ENCODE measurements at regions of chr5 and their contacts with region 1.

Region 1: GRCh38 chr5:78359831-78360673 is at the start of gene SCAMP1:
- DNase-seq: peak; percentile 88 to 96 (median 91)
- ATAC-seq: peak; percentile 78
- H3K4me3 ChIP-seq: peak within 1 kb of the TSS; percentile 95
- H3K4me3 Mint-ChIP-seq: peak within 1 kb of the TSS; percentile 86
- H3K27ac ChIP-seq: peak within 1 kb of the TSS; percentile 92 to 97
- H3K27ac Mint-ChIP-seq: peak within 1 kb of the TSS; percentile 96
- H3K4me1 ChIP-seq: peaks cover 27% of the 10 kb centered on the region
- H3K4me1 Mint-ChIP-seq: peaks cover 53% of the 10 kb centered on the region
- H3K27me3 ChIP-seq: no peaks in the 10 kb centered on the region
- H3K27me3 Mint-ChIP-seq: no peaks in the 10 kb centered on the region
- CTCF ChIP-seq: no peak
- total RNA-seq, gene SCAMP1: 19.2 to 20.3 TPM

Region 2: DNA sequence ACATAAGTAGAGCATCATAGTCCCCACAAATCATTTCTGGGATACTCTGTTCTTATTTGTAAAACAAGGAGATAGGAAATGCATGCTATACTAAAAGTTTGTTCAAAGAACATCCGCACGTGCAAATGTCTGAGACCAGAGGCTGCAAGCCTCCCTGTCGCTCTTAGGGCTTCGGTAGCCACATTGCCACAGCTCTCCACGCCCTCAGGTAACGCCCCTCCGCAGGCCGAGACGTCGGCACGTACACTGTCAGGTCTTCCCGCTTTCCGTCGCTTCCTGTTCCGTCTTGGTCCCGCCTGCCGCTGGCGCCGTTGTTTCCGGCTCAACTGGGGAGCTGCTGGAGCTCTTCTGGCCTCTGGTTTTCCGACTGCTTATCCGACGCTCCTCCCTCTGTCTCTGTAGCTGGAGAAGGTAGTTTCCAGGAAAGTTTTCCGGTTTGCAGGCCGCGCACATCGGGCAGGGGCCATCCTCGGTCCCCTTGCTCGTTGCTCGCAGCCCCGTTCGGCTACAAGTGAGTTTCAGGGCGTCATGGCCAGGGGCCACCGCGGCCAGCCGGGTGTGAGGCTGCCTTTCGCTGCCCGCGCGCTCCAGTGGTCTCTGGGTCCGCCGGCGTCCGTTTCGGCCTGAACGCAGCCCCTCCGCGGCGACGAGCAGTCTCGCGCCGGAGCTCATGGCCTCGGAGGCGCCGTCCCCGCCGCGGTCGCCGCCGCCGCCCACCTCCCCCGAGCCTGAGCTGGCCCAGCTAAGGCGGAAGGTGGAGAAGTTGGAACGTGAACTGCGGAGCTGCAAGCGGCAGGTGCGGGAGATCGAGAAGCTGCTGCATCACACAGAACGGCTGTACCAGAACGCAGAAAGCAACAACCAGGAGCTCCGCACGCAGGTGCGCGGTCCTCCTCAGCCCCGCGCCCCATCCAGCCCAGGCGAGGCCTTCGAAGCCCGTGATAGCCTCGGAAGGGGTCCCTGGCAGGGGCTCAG is 1329.7 kb before region 1 on chr5 and contains the start of gene AGGF1:
- CTCF ChIA-PET with region 1: no interaction called
- POLR2A ChIA-PET with region 1: no interaction called
- intact Hi-C with region 1: loop called in 1 of 2 experiments (anchors 5 kb)
- DNase-seq: peak; percentile 78 to 95 (median 92)
- ATAC-seq: peak; percentile 98
- H3K4me3 ChIP-seq: peak within 1 kb of the TSS; percentile 84 to 94
- H3K4me3 Mint-ChIP-seq: peak within 1 kb of the TSS; percentile 90
- H3K27ac ChIP-seq: peak within 1 kb of the TSS; percentile 69 to 85
- H3K27ac Mint-ChIP-seq: peak within 1 kb of the TSS; percentile 94
- H3K4me1 ChIP-seq: peaks cover 21% of the 10 kb centered on the region
- H3K4me1 Mint-ChIP-seq: peaks cover 43% of the 10 kb centered on the region
- H3K27me3 ChIP-seq: no peaks in the 10 kb centered on the region
- H3K27me3 Mint-ChIP-seq: no peaks in the 10 kb centered on the region
- CTCF ChIP-seq: no peak
- total RNA-seq, gene AGGF1: 14.8 to 14.9 TPM

Region 3: GRCh38 chr5:77086689-77087483 is 1273.2 kb before region 1 on chr5 and contains the start of gene ZBED3:
- CTCF ChIA-PET with region 1: no interaction called
- POLR2A ChIA-PET with region 1: no interaction called
- intact Hi-C with region 1: loop called in 1 of 2 experiments (anchors 5 kb)
- DNase-seq: peak; percentile 29 to 87 (median 68)
- ATAC-seq: peak; percentile 87
- H3K4me3 ChIP-seq: peak within 1 kb of the TSS; percentile 74
- H3K4me3 Mint-ChIP-seq: peak within 1 kb of the TSS; percentile 92
- H3K27ac ChIP-seq: peak within 1 kb of the TSS; percentile 34 to 57
- H3K27ac Mint-ChIP-seq: peak within 1 kb of the TSS; percentile 84
- H3K4me1 ChIP-seq: peaks cover 16% of the 10 kb centered on the region
- H3K4me1 Mint-ChIP-seq: peaks cover 25% of the 10 kb centered on the region
- H3K27me3 ChIP-seq: no peaks in the 10 kb centered on the region
- H3K27me3 Mint-ChIP-seq: peaks cover 2% of the 10 kb centered on the region
- CTCF ChIP-seq: peak; percentile 31
- total RNA-seq, gene ZBED3: 11.6 to 12.3 TPM

Region 4: GRCh38 chr5:78984439-78985115 is 624.5 kb after region 1 on chr5:
- CTCF ChIA-PET with region 1: no interaction called
- POLR2A ChIA-PET with region 1: interaction called, 9 read pairs
- intact Hi-C with region 1: loop called (anchors 1 to 5 kb)
- DNase-seq: peak; percentile 55 to 90 (median 75)
- ATAC-seq: peak; percentile 74
- H3K4me3 ChIP-seq: peak overlapping the region; percentile 54 to 68
- H3K4me3 Mint-ChIP-seq: peak overlapping the region; percentile 94
- H3K27ac ChIP-seq: peak overlapping the region; percentile 40 to 75
- H3K27ac Mint-ChIP-seq: peak overlapping the region; percentile 92
- H3K4me1 ChIP-seq: peaks cover 14% of the 10 kb centered on the region
- H3K4me1 Mint-ChIP-seq: peaks cover 28% of the 10 kb centered on the region
- H3K27me3 ChIP-seq: no peaks in the 10 kb centered on the region
- H3K27me3 Mint-ChIP-seq: no peaks in the 10 kb centered on the region
- CTCF ChIP-seq: no peak

Region 5: GRCh38 chr5:79235634-79236363 is 875.7 kb after region 1 on chr5 and contains the start of gene JMY:
- CTCF ChIA-PET with region 1: no interaction called
- POLR2A ChIA-PET with region 1: interaction called, 3 read pairs
- intact Hi-C with region 1: loop called in 1 of 2 experiments (anchors 5 kb)
- DNase-seq: peak; percentile 72 to 94 (median 85)
- ATAC-seq: peak; percentile 86
- H3K4me3 ChIP-seq: peak within 1 kb of the TSS; percentile 79 to 81
- H3K4me3 Mint-ChIP-seq: peak within 1 kb of the TSS; percentile 97
- H3K27ac ChIP-seq: peak within 1 kb of the TSS; percentile 91 to 98
- H3K27ac Mint-ChIP-seq: peak within 1 kb of the TSS; percentile 96
- H3K4me1 ChIP-seq: peaks cover 28% of the 10 kb centered on the region
- H3K4me1 Mint-ChIP-seq: peaks cover 34% of the 10 kb centered on the region
- H3K27me3 ChIP-seq: no peaks in the 10 kb centered on the region
- H3K27me3 Mint-ChIP-seq: no peaks in the 10 kb centered on the region
- CTCF ChIP-seq: no peak
- total RNA-seq, gene JMY: 104 TPM